H1 (cell line): ENCODE measurements at regions of chr3 and their contacts with region 1.

Region 1: GRCh38 chr3:143070977-143071551 is 48.5 kb upstream of the CHST2 start:
- DNase-seq: no peak
- H3K4me3 ChIP-seq: no peak overlapping the region
- H3K27ac ChIP-seq: no peak overlapping the region
- H3K4me1 ChIP-seq: peaks cover 0 to 12% (median 9%) of the 10 kb centered on the region in 4 experiments; a peak in 5 of 7 replicates
- H3K27me3 ChIP-seq: no peaks in the 10 kb centered on the region
- CTCF ChIP-seq: no peak
- EP300 ChIP-seq: no peak
- POLR2A ChIP-seq: no peak
- RAD21 ChIP-seq: no peak; a peak in 1 of 4 replicates

Region 2: GRCh38 chr3:143081844-143082778 is 11.0 kb after region 1 on chr3:
- CTCF ChIA-PET with region 1: interaction called, 16 read pairs
- POLR2A ChIA-PET with region 1: no interaction called
- DNase-seq: no peak
- H3K4me3 ChIP-seq: no peak overlapping the region
- H3K27ac ChIP-seq: no peak overlapping the region
- H3K4me1 ChIP-seq: no peaks in the 10 kb centered on the region; a peak in 1 of 7 replicates
- H3K27me3 ChIP-seq: no peaks in the 10 kb centered on the region
- CTCF ChIP-seq: no peak
- EP300 ChIP-seq: no peak
- POLR2A ChIP-seq: no peak
- RAD21 ChIP-seq: no peak